ENCODE measurements at regions of chr2 and their contacts with region 1.

Region 1: DNA sequence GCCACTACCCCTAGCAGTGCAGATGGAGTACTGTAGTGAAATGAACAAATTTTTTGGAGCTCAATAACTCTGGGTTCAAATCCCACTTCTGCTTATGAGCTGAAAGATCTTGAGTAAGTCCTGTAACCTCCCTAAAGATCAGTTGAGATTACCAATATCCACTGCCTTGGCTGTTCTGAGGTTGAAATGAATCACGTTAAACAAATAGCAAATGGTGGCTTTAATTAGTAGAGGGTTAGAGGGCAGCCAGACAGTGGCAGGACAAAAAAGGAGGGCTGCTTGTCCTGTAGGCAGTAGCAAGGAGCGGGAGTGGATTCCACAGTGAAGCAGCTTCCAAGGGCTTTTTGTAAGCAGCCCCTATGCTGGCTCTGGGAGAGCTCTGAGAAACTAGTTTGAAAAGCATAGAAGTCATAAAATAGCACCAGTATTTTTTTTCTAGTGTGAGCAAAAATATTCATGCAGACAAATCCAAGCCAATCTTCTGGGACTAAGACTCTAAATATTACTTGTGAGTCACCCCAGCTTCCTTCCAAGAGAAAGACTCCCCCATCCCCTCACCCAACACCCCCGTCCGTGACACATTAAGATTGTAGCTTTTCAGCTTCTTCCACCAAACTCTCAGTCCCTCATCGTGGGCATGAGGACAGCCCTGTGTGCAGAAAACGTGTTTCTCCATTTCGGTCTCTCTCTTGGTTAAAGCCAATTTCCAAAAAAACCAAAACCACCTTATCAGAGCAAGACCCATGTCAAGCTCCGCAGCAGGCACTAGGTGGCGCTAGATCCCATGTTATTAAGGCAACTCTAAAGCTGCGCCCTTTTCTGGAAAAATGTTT is 123.5 kb upstream of the LGALSL start:
- DNase-seq: peak; percentile 88
- ATAC-seq: peak; percentile 82
- H3K4me3 ChIP-seq: peak overlapping the region; percentile 43
- H3K27ac ChIP-seq: no peak overlapping the region
- H3K4me1 ChIP-seq: peaks cover 6% of the 10 kb centered on the region; the same call in 1 of the 2 replicates
- H3K27me3 ChIP-seq: peaks cover 11% of the 10 kb centered on the region
- CTCF ChIP-seq: peak; percentile 93
- POLR2A ChIP-seq: no peak
- RAD21 ChIP-seq: peak; percentile 92

Region 2: DNA sequence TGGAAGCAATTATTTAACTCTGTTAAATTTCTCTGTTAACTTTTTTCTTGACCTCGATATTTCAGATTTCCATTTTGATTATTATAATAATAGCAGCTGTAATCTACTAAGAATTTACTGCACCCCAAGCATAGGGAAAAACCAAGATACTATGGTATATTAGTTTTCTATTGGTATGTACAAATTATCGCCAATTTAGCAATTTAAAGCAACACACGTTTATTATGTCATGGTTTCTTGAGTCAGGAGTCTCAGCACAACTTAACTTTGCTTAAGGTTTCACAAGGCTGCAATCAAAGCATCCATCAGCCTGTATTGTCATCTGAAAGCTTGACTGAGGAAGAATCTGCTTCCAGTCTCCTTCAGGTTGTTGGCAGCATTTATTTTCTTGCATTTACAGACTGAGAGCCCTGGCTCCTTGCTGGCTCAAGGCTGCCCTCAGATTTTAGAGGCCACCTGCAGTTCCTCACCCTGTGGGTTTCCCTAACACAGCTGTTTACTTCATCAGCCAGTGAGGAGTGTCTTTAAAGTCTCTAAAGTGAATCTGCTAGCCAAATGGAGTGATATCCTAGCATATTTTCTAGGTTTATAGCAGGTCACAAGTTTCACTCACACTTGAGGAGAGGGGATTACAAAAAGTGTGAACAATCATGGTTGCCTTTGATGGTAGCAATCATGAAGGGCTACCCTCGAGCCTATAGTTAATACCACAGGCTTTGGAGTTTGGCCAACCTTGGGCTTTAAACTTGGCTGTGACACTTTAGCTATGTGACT is 306.8 kb before region 1 on chr2:
- CTCF ChIA-PET with region 1: no interaction called
- POLR2A ChIA-PET with region 1: no interaction called
- dilution Hi-C with region 1: no loop called
- in situ Hi-C with region 1: no loop called
- intact Hi-C with region 1: no loop called
- DNase-seq: no peak
- ATAC-seq: no peak
- H3K4me3 ChIP-seq: no peak overlapping the region
- H3K27ac ChIP-seq: no peak overlapping the region
- H3K4me1 ChIP-seq: peaks cover 4% of the 10 kb centered on the region
- H3K27me3 ChIP-seq: no peaks in the 10 kb centered on the region
- CTCF ChIP-seq: no peak
- POLR2A ChIP-seq: no peak
- RAD21 ChIP-seq: no peak

Region 3: GRCh38 chr2:64052468-64053241 is 277.8 kb before region 1 on chr2:
- CTCF ChIA-PET with region 1: interaction called, 11 read pairs
- POLR2A ChIA-PET with region 1: no interaction called
- dilution Hi-C with region 1: no loop called
- in situ Hi-C with region 1: loop called (anchors 5 kb)
- intact Hi-C with region 1: loop called (anchors 1 kb)
- DNase-seq: peak; percentile 5
- ATAC-seq: no peak
- H3K4me3 ChIP-seq: no peak overlapping the region
- H3K27ac ChIP-seq: no peak overlapping the region
- H3K4me1 ChIP-seq: no peaks in the 10 kb centered on the region
- H3K27me3 ChIP-seq: peaks cover 4% of the 10 kb centered on the region
- CTCF ChIP-seq: no peak
- POLR2A ChIP-seq: no peak
- RAD21 ChIP-seq: no peak

Region 4: GRCh38 chr2:64523666-64524603 is 193.4 kb after region 1 on chr2 and contains the start of gene AFTPH:
- CTCF ChIA-PET with region 1: interaction called, 4 read pairs
- POLR2A ChIA-PET with region 1: no interaction called
- dilution Hi-C with region 1: no loop called
- in situ Hi-C with region 1: no loop called
- intact Hi-C with region 1: loop called (anchors 1 kb)
- DNase-seq: peak; percentile 98
- ATAC-seq: peak; percentile 98
- H3K4me3 ChIP-seq: peak within 1 kb of the TSS; percentile 87
- H3K27ac ChIP-seq: peak within 1 kb of the TSS; percentile 68
- H3K4me1 ChIP-seq: no peaks in the 10 kb centered on the region
- H3K27me3 ChIP-seq: peaks cover 5% of the 10 kb centered on the region
- CTCF ChIP-seq: no peak
- POLR2A ChIP-seq: peak; percentile 60
- RAD21 ChIP-seq: no peak
- total RNA-seq, gene AFTPH: 19.9 and 21.9 TPM in 2 replicates

Region 5: DNA sequence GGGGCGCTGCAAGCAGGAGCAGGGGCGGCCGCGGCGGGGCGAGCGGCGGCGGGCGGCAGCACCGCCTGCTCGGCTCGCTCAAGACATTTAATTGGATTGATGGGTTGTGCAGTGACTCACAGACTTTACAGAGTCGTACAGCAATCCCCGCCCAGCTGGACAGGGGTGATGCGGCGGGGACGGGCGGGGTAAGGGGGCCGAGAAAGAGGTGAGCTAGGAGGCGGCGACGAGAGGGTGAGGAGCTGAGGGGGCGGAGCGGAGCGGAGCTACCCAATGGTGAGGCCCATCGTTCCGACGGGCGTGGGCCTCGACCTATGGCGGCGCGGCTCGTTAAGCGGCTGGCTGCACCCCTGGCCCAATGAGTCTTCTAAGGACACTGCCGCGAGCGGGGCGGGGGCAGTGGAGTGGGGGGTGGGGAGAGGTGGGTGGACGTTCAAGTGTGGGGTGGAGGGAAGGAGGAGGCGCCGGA is 420.4 kb after region 1 on chr2:
- CTCF ChIA-PET with region 1: no interaction called
- POLR2A ChIA-PET with region 1: no interaction called
- dilution Hi-C with region 1: no loop called
- in situ Hi-C with region 1: no loop called
- intact Hi-C with region 1: loop called (anchors 10 kb)
- DNase-seq: peak; percentile 99
- ATAC-seq: peak; percentile 88
- H3K4me3 ChIP-seq: peak overlapping the region; percentile 67
- H3K27ac ChIP-seq: peak overlapping the region; percentile 77
- H3K4me1 ChIP-seq: peaks cover 2% of the 10 kb centered on the region; the same call in 1 of the 2 replicates
- H3K27me3 ChIP-seq: no peaks in the 10 kb centered on the region
- CTCF ChIP-seq: peak; percentile 35; the same call in 1 of the 2 replicates
- POLR2A ChIP-seq: peak; percentile 67; the same call in 1 of the 2 replicates
- RAD21 ChIP-seq: peak; percentile 46; the same call in 1 of the 2 replicates

Region 6: GRCh38 chr2:64888591-64889309 is 558.3 kb after region 1 on chr2:
- CTCF ChIA-PET with region 1: no interaction called
- POLR2A ChIA-PET with region 1: no interaction called
- dilution Hi-C with region 1: no loop called
- in situ Hi-C with region 1: no loop called
- intact Hi-C with region 1: loop called (anchors 5 kb)
- DNase-seq: peak; percentile 55
- ATAC-seq: peak; percentile 49
- H3K4me3 ChIP-seq: no peak overlapping the region
- H3K27ac ChIP-seq: no peak overlapping the region
- H3K4me1 ChIP-seq: no peaks in the 10 kb centered on the region
- H3K27me3 ChIP-seq: peaks cover 19% of the 10 kb centered on the region
- CTCF ChIP-seq: peak; percentile 60
- POLR2A ChIP-seq: no peak
- RAD21 ChIP-seq: peak; percentile 65

Region 7: DNA sequence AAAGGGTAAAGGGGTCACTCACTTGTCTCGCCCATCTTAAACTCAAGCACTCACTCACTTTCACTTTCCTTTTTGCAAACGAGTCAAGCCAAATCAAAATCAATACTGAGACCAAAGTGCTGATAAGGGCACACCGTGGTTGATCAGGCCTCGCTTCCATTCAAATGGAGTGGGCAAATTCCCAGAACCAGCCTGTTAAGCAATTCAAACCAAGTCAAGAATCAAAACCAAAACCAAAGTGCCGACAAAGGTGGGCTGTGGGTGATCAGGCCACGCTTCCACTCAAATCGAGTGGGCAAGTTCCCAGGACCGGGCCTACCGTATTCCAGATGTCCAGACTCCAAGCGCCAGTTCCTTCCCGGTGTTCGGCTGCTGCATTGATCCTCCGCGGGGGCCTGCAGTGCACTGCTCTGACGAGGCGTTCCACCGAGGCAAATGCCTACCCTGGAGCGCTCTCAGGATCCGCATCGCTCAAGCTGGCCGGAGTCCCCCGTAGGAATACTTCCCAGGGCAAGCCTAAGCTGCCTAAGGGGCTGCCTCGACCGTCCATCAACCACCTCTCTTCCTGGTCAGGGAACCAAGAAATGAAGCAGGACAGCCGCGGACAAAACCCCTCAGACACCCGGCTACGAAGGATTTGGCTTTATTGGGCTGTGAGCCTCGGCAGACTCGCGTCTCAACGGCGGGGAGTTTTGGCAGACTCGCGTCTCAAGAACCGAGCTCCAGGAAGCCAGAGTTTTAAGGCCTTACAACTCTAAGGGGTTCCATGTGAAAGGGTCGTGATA is 568.8 kb after region 1 on chr2:
- CTCF ChIA-PET with region 1: no interaction called
- POLR2A ChIA-PET with region 1: no interaction called
- dilution Hi-C with region 1: no loop called
- in situ Hi-C with region 1: no loop called
- intact Hi-C with region 1: no loop called
- DNase-seq: no peak
- ATAC-seq: no peak
- H3K4me3 ChIP-seq: no peak overlapping the region
- H3K27ac ChIP-seq: no peak overlapping the region
- H3K4me1 ChIP-seq: no peaks in the 10 kb centered on the region
- H3K27me3 ChIP-seq: peaks cover 27% of the 10 kb centered on the region
- CTCF ChIP-seq: no peak
- POLR2A ChIP-seq: no peak
- RAD21 ChIP-seq: no peak